BJ (cell line): ENCODE measurements at regions of chr15 and their contacts with region 1.

Region 1: GRCh38 chr15:80776420-80777045 is 2.6 kb upstream of the CEMIP start:
- DNase-seq: no peak
- H3K4me3 ChIP-seq: no peak overlapping the region
- H3K27me3 ChIP-seq: no peaks in the 10 kb centered on the region
- CTCF ChIP-seq: peak; percentile 85

Region 2: GRCh38 chr15:80418892-80419537 is 357.5 kb before region 1 on chr15:
- CTCF ChIA-PET with region 1: interaction called, 12 read pairs
- POLR2A ChIA-PET with region 1: no interaction called
- DNase-seq: no peak
- H3K4me3 ChIP-seq: no peak overlapping the region
- H3K27me3 ChIP-seq: no peaks in the 10 kb centered on the region
- CTCF ChIP-seq: peak; percentile 84

Region 3: DNA sequence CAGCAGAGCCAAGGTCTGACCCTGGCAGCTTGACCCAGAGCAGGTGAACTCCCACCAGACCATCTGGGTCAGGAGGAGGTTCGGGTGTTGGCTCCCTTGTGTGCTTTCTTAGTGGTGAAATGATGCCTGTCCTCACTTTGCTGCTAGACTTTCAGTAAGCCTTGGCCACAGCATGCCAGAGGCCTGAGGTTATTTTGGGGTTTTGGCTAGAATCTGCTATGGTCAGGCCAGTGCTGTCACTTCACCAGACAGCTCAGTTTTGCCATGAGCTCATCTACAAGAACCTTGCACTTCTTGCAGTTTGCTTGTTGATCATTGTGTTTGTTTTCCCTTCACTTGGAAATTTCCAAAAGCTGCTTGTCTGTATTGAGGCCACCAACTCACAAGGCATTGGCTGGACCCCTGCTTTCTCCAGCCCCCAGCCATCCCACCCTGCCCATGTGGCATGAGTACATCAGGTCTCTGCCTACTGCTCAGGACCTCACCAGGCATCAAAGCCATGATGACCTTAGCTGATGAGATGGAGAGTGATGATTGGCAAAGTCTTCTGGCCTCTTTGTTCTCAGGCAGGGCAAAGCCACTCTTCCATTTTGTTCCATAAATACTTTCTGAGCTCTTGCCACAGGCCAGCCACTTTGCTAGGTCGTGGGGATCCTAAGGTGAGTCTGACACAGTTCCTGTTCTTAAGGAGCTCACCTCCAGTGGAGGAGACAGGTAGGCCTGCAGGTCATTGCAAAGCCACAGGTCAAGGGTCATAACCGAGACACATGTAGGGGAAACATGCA is 249.8 kb before region 1 on chr15:
- CTCF ChIA-PET with region 1: interaction called, 15 read pairs
- POLR2A ChIA-PET with region 1: interaction called, 4 read pairs
- DNase-seq: peak; percentile 81
- H3K4me3 ChIP-seq: no peak overlapping the region
- H3K27me3 ChIP-seq: no peaks in the 10 kb centered on the region
- CTCF ChIP-seq: no peak

Region 4: GRCh38 chr15:80580106-80580505 is 196.4 kb before region 1 on chr15:
- CTCF ChIA-PET with region 1: interaction called, 19 read pairs
- POLR2A ChIA-PET with region 1: no interaction called
- DNase-seq: peak; percentile 88
- H3K4me3 ChIP-seq: no peak overlapping the region
- H3K27me3 ChIP-seq: no peaks in the 10 kb centered on the region
- CTCF ChIP-seq: no peak

Region 5: GRCh38 chr15:80695104-80695910 is 81.2 kb before region 1 on chr15 and contains the start of gene ABHD17C:
- CTCF ChIA-PET with region 1: interaction called, 33 read pairs
- POLR2A ChIA-PET with region 1: interaction called, 3 read pairs
- DNase-seq: no peak
- H3K4me3 ChIP-seq: peak within 1 kb of the TSS; percentile 92
- H3K27me3 ChIP-seq: no peaks in the 10 kb centered on the region
- CTCF ChIP-seq: no peak
- polyA plus RNA-seq, gene ABHD17C: 19.2 and 22.6 TPM in 2 replicates

Region 6: GRCh38 chr15:80788536-80788935 is 12.0 kb after region 1 on chr15:
- CTCF ChIA-PET with region 1: interaction called, 5 read pairs
- POLR2A ChIA-PET with region 1: interaction called, 14 read pairs
- DNase-seq: no peak
- H3K4me3 ChIP-seq: no peak overlapping the region
- H3K27me3 ChIP-seq: no peaks in the 10 kb centered on the region
- CTCF ChIP-seq: no peak